ENCODE measurements at regions of chr3 and their contacts with region 1.

Region 1: GRCh38 chr3:33798411-33799201 is at the start of gene PDCD6IP:
- DNase-seq: peak; percentile 89
- ATAC-seq: peak; percentile 93
- H3K4me3 ChIP-seq: peak within 1 kb of the TSS; percentile 73
- H3K27ac ChIP-seq: peak within 1 kb of the TSS; percentile 84
- H3K4me1 ChIP-seq: peaks cover 3% of the 10 kb centered on the region
- H3K27me3 ChIP-seq: no peaks in the 10 kb centered on the region
- CTCF ChIP-seq: 0 out of 2 replicates have a peak, but pooled peaks have one; percentile 5
- POLR2A ChIP-seq: peak; percentile 95
- RAD21 ChIP-seq: no peak
- total RNA-seq, gene PDCD6IP: 68.1 and 76.1 TPM in 2 replicates

Region 2: GRCh38 chr3:32577581-32578556 is 1220.7 kb before region 1 on chr3:
- CTCF ChIA-PET with region 1: no interaction called
- POLR2A ChIA-PET with region 1: no interaction called
- dilution Hi-C with region 1: no loop called
- in situ Hi-C with region 1: no loop called
- intact Hi-C with region 1: no loop called
- DNase-seq: peak; percentile 65
- ATAC-seq: peak; percentile 65
- H3K4me3 ChIP-seq: peak overlapping the region; percentile 41; the same call in 1 of the 2 replicates
- H3K27ac ChIP-seq: peak overlapping the region; percentile 60; the same call in 1 of the 2 replicates
- H3K4me1 ChIP-seq: peaks cover 5% of the 10 kb centered on the region
- H3K27me3 ChIP-seq: no peaks in the 10 kb centered on the region
- CTCF ChIP-seq: no peak
- POLR2A ChIP-seq: no peak
- RAD21 ChIP-seq: no peak

Region 3: GRCh38 chr3:32973982-32974381 is 824.6 kb before region 1 on chr3:
- CTCF ChIA-PET with region 1: no interaction called
- POLR2A ChIA-PET with region 1: no interaction called
- dilution Hi-C with region 1: no loop called
- in situ Hi-C with region 1: loop called (anchors 25 kb)
- intact Hi-C with region 1: no loop called
- DNase-seq: peak; percentile 63
- ATAC-seq: peak; percentile 97
- H3K4me3 ChIP-seq: no peak overlapping the region
- H3K27ac ChIP-seq: no peak overlapping the region
- H3K4me1 ChIP-seq: no peaks in the 10 kb centered on the region; the same call in 1 of the 2 replicates
- H3K27me3 ChIP-seq: peaks cover 8% of the 10 kb centered on the region
- CTCF ChIP-seq: no peak
- POLR2A ChIP-seq: no peak
- RAD21 ChIP-seq: no peak

Measured in IMR-90 (cell line).